Right cardiac atrium (tissue), 5 donors: ENCODE measurements at regions of chr12 and their contacts with region 1.

Region 1: GRCh38 chr12:7219599-7220243 is 30.2 kb downstream of the PEX5 start:
- DNase-seq: peak; percentile 63 to 85 (median 71)
- ATAC-seq: peak; percentile 45 to 59
- H3K4me3 ChIP-seq: no peak overlapping the region
- H3K27ac ChIP-seq: no peak overlapping the region
- H3K4me1 ChIP-seq: no peaks in the 10 kb centered on the region
- H3K27me3 ChIP-seq: no peaks in the 10 kb centered on the region

Region 2: DNA sequence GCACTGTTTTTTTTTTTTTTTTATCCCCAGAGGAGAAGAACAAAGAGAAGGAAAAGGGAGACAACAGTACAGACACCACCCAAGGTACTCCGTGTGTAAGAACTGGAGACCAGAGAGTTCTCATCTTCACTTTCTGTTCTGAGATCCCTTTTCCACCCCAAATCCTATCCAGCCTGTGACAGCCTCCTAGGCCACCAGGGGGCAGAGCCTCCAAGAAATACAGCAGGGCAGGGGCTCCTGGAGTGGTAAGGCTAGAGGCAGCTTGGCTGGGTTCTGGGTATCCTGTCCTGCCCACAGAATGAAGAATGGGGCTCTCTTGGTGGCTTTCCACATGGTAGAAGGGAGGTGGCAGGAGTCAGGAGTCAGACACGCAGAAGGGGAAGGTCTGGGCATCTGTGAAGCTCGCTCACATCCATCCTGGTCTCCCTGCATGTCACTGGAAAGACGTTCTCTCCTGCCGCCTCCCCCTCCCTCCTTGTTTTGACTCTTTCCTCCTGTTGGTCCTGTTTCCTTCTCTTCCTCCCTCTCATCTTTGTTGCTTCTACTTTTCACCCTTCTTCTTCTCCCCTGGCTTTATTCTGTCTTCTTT is 77.6 kb before region 1 on chr12:
- intact Hi-C with region 1: no loop called
- DNase-seq: peak in 1 of 3 donors; percentile 71
- ATAC-seq: peak; percentile 30 to 41
- H3K4me3 ChIP-seq: no peak overlapping the region
- H3K27ac ChIP-seq: no peak overlapping the region
- H3K4me1 ChIP-seq: no peaks in the 10 kb centered on the region
- H3K27me3 ChIP-seq: no peaks in the 10 kb centered on the region

Region 3: GRCh38 chr12:7327918-7328317 is 108.2 kb after region 1 on chr12:
- intact Hi-C with region 1: no loop called
- DNase-seq: no peak
- ATAC-seq: no peak
- H3K4me3 ChIP-seq: no peak overlapping the region
- H3K27ac ChIP-seq: no peak overlapping the region
- H3K4me1 ChIP-seq: no peaks in the 10 kb centered on the region
- H3K27me3 ChIP-seq: no peaks in the 10 kb centered on the region

Region 4: DNA sequence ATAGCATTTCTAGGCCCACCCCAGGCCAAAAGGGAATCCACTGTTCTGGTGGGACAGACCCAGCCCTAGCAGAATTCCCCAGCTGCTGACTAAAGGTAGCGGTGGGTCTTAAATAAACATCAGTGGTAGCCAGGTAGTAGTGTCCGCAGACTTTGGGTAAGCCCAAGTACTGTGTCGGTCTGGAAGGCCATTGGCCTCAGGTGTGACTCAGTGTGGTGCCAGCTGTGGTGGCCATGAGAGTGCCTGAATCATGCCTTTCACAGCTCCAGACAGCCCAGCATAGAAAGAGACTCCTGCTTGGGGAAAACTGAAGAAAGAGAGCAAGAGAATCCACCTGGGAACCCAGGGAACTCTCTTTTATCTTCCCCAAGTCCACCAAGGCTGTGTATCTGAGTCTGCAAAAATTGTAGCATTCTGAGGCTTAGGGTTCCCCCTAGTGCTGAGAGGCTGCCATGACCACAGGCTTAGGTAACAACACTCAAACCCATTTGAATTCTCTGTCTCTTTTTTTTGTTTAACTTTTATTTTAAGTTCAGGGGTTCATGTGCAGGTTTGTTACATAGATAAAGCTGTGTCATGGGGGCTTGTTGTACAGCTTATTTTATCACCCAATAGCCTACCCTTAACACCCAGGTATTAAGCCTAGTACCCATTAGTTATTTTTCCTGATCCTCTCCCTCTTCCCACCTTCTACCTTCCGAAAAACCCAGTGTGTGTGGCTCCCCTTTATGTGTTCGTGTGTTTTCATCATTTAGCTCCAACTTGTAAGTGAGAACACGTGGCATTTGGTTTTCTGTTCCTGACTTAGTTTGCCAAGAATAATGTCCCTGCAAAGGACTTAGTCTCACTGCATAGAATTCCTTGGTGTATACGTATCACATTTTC is 240.9 kb after region 1 on chr12:
- intact Hi-C with region 1: loop called in 1 of 4 experiments (anchors 10 kb)
- DNase-seq: peak in 1 of 3 donors; percentile 61
- ATAC-seq: peak; percentile 68 to 76
- H3K4me3 ChIP-seq: no peak overlapping the region
- H3K27ac ChIP-seq: no peak overlapping the region
- H3K4me1 ChIP-seq: no peaks in the 10 kb centered on the region
- H3K27me3 ChIP-seq: no peaks in the 10 kb centered on the region

Region 5: DNA sequence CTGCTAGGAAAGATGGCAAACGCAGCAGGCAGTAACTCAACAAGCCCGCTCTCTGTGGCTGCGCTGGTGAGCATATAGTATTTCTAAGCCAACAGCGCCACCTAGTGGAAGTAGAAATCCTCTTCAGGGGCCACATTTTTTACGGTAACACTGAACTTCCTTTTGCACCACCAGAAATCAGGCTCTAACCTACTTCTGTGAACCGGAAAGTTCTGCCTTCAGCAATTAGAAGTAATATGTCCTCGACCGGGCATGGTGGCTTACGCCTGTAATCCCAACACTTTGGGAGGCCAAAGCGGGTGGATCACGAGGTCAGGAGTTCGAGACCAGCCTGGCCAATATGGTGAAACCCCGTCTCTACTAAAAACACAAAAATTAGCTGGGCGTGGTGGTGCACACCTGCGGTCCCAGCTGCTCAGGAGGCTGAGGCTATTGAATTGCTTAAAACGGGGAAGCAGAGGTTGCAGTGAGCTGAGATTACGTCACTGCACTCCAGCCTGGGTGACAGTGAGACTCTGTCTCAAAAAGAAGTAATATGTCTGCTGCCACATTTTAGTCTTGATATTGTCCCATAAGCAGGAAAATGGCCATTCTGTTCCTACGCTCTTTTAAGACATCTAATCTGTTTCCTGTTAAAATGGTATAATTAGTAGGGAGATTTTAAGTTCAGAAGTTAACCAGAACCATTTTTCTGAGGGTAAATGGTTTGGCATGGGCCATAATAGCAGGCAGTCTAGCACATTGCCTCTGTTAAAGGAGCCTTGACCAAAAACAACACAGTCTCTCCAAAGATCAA is 419.2 kb after region 1 on chr12:
- intact Hi-C with region 1: loop called (anchors 2 to 5 kb)
- DNase-seq: peak; percentile 68 to 83 (median 77)
- ATAC-seq: peak; percentile 96 to 97
- H3K4me3 ChIP-seq: peak overlapping the region; percentile 5
- H3K27ac ChIP-seq: peak overlapping the region; percentile 19
- H3K4me1 ChIP-seq: no peaks in the 10 kb centered on the region
- H3K27me3 ChIP-seq: no peaks in the 10 kb centered on the region